MCF 10A (cell line): ENCODE measurements at regions of chr11 and their contacts with region 1.

Region 1: GRCh38 chr11:17658211-17658610 is 61.2 kb upstream of the MYOD1 start:
- DNase-seq: no peak
- H3K4me3 Mint-ChIP-seq: no peak overlapping the region
- H3K27ac Mint-ChIP-seq: no peak overlapping the region
- H3K4me1 Mint-ChIP-seq: no peaks in the 10 kb centered on the region
- H3K27me3 Mint-ChIP-seq: no peaks in the 10 kb centered on the region
- CTCF ChIP-seq: no peak

Region 2: GRCh38 chr11:17673951-17674350 is 15.7 kb after region 1 on chr11:
- CTCF ChIA-PET with region 1: no interaction called
- POLR2A ChIA-PET with region 1: no interaction called
- intact Hi-C with region 1: loop called (anchors 1 kb)
- DNase-seq: peak; percentile 17
- H3K4me3 Mint-ChIP-seq: no peak overlapping the region
- H3K27ac Mint-ChIP-seq: no peak overlapping the region
- H3K4me1 Mint-ChIP-seq: no peaks in the 10 kb centered on the region
- H3K27me3 Mint-ChIP-seq: peaks cover 78% of the 10 kb centered on the region
- CTCF ChIP-seq: no peak